Activated CD8-positive, alpha-beta T cell treated with anti-CD3 and anti-CD28 coated beads, Interleukin-2, amount 10 ng/mL, durations not matched to agents 7 days and 5 days (primary cell): ENCODE measurements at regions of chr11 and their contacts with region 1.

Region 1: DNA sequence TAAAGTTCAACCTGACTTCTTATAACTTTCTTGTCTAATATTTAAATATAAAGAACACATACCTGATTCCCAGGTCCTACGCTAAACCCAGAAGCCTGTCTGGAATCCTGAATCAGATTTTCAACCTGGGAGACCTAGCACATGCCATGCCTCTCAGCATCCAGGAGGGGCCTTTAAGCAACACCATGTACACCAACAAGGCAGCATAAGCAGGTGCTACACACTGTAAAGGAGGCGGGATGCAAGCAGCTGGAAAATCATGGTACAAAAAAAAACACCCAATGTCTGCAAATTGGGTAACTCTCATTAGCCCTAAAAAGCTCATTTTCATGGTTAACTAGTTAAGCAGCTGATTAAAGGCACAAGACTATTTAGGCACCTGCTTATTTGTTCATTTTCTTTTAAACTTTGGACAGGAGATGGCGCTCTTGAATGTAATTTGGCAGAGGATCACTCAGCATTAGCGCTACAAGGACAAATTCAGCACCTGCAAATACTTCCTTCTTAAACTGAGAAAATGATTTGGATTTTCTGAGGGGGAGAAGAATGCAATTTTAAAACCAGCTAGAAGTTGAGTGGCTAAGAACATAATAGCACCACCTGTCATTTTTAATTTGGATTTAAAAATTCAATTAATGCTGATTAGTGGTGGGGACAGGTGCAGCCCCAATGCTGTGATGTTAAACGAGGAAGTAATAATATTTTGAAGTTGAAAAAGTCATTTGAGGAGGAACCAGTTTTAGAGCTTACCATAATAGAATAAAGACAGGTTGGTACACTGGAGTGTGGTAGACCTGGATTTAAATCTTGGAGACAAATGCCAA is 104.0 kb downstream of the FAR1 start:
- DNase-seq: peak; percentile 57
- ATAC-seq: peak; percentile 77
- H3K4me3 Mint-ChIP-seq: no peak overlapping the region
- H3K27ac Mint-ChIP-seq: no peak overlapping the region
- H3K4me1 Mint-ChIP-seq: no peaks in the 10 kb centered on the region
- H3K27me3 Mint-ChIP-seq: peaks cover 16% of the 10 kb centered on the region

Region 2: DNA sequence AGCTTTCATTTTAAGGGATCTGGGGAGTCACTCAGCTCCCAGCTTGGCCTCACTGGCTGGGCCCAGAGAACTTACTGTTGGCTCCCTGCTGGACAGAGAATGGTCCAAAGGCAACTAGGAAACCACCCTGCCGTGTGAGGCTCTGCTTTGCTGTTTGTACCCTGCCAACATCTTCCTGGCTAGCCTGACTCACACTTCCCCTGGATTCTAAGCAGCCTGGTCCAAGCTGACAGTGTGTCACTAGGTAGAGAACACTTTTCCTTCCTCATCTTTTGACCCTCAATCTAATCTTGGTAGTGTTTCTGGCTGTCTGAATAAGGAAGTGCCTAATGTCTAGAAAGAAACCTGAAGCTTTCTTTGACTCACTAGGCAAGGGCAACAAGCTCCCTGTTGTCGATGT is 27.3 kb before region 1 on chr11:
- CTCF ChIA-PET with region 1: no interaction called
- POLR2A ChIA-PET with region 1: no interaction called
- DNase-seq: no peak
- ATAC-seq: no peak
- H3K4me3 Mint-ChIP-seq: no peak overlapping the region
- H3K27ac Mint-ChIP-seq: no peak overlapping the region
- H3K4me1 Mint-ChIP-seq: no peaks in the 10 kb centered on the region
- H3K27me3 Mint-ChIP-seq: peaks cover 13% of the 10 kb centered on the region

Region 3: DNA sequence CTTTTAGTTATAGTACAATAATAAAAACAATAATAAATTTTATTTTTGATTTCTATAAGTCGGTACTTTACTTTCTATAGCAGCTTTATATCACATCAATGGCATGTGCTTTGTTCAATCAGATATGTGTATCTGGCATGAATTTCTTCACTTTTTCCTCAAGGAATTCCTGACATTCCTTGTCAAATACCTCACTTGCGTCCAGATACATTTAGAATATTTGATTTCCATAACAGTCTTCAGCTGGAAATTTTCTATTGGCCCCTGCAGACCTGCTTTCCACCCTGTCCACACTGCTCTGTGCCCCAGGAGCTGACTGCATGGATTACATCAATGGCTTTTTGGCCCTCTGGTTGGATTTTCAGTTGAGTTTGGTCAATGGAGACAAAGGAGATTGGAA is 10.7 kb before region 1 on chr11:
- CTCF ChIA-PET with region 1: interaction called, 11 read pairs
- POLR2A ChIA-PET with region 1: no interaction called
- DNase-seq: no peak
- ATAC-seq: no peak
- H3K4me3 Mint-ChIP-seq: no peak overlapping the region
- H3K27ac Mint-ChIP-seq: no peak overlapping the region
- H3K4me1 Mint-ChIP-seq: no peaks in the 10 kb centered on the region
- H3K27me3 Mint-ChIP-seq: no peaks in the 10 kb centered on the region

Region 4: DNA sequence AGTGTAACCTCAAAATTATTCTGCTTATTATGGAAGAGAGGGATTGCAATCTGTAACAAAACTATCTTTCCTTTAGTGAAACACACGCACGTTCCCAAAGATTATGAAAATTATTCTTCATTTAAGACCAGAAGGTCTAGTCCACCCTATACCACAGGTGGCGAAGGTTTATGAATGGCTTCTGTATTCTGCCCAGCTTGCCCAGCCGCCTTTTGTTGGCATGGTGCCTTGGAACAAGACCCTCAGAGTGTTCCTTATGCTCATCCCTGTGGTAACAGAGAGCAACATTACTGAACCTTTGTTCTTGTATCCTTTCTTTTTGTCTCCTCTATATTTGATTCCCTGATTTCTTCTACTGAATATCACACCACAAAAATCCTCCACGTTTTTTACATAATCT is 12.4 kb after region 1 on chr11:
- CTCF ChIA-PET with region 1: interaction called, 12 read pairs
- POLR2A ChIA-PET with region 1: no interaction called
- DNase-seq: no peak
- ATAC-seq: no peak
- H3K4me3 Mint-ChIP-seq: no peak overlapping the region
- H3K27ac Mint-ChIP-seq: no peak overlapping the region
- H3K4me1 Mint-ChIP-seq: no peaks in the 10 kb centered on the region
- H3K27me3 Mint-ChIP-seq: peaks cover 4% of the 10 kb centered on the region

Region 5: GRCh38 chr11:13955971-13956421 is 183.6 kb after region 1 on chr11:
- CTCF ChIA-PET with region 1: interaction called, 45 read pairs
- POLR2A ChIA-PET with region 1: no interaction called
- DNase-seq: peak; percentile 69
- ATAC-seq: peak; percentile 58
- H3K4me3 Mint-ChIP-seq: no peak overlapping the region
- H3K27ac Mint-ChIP-seq: no peak overlapping the region
- H3K4me1 Mint-ChIP-seq: no peaks in the 10 kb centered on the region
- H3K27me3 Mint-ChIP-seq: peaks cover 30% of the 10 kb centered on the region

Region 6: DNA sequence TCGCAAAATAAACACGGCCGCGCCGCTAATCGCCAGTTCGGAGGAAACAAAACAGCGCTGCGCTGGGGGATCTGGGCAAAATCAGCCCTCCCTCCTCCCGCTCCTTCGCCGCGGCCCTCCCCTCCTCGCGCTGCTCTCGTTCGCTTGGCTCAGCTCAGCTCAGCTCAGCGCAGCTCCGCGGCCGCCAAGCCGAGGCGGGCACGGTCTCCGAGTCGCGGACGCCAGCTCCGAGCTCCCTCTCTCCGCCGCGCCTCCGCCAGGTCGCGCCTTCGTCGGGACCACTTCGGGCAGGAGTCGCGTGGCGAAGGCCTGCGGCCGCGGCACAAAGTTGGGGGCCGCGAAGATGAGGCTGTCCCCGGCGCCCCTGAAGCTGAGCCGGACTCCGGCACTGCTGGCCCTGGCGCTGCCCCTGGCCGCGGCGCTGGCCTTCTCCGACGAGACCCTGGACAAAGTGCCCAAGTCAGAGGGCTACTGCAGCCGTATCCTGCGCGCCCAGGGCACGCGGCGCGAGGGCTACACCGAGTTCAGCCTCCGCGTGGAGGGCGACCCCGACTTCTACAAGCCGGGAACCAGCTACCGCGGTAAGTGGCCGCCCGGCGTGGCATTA is 190.2 kb after region 1 on chr11 and contains the start of gene SPON1:
- CTCF ChIA-PET with region 1: interaction called, 45 read pairs
- POLR2A ChIA-PET with region 1: no interaction called
- DNase-seq: peak; percentile 59
- ATAC-seq: peak; percentile 82
- H3K4me3 Mint-ChIP-seq: peak within 1 kb of the TSS; percentile 59
- H3K27ac Mint-ChIP-seq: peak within 1 kb of the TSS; percentile 14
- H3K4me1 Mint-ChIP-seq: peaks cover 11% of the 10 kb centered on the region
- H3K27me3 Mint-ChIP-seq: peaks cover 72% of the 10 kb centered on the region
- total RNA-seq, gene SPON1: 0.42 to 0.47 TPM

Region 7: DNA sequence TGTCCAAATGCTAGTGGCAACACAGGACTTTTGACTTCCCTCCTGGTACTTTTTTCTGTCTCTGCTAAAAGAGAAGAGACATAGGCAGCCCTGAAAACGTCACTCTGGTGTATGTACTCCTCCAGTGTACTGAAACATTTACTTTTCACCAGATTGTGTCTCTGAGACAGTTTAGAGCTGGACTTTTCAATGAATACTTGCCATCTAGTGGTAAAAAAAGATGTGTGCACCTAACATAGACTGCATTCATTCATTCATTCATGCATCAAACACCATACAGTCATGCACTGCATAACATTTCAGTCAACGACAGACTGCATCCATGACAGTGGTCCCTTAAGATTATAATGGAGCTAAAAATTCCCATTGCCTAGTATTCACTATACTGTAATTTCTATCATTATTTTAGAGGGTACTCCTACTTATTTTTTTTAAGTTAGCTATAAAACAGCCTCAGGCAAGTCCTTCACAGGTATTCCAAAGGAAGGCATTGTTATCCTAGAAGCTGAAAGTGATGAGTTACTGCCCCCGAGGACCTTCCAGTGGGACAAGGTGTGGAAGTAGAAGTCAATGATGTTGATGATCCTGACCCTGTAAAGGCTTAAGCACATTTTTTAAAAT is 376.3 kb after region 1 on chr11:
- CTCF ChIA-PET with region 1: interaction called, 37 read pairs
- POLR2A ChIA-PET with region 1: no interaction called
- DNase-seq: no peak
- ATAC-seq: peak; percentile 79
- H3K4me3 Mint-ChIP-seq: no peak overlapping the region
- H3K27ac Mint-ChIP-seq: no peak overlapping the region
- H3K4me1 Mint-ChIP-seq: no peaks in the 10 kb centered on the region
- H3K27me3 Mint-ChIP-seq: peaks cover 2% of the 10 kb centered on the region

Region 8: GRCh38 chr11:14249121-14249963 is 476.9 kb after region 1 on chr11:
- CTCF ChIA-PET with region 1: interaction called, 61 read pairs
- POLR2A ChIA-PET with region 1: interaction called, 3 read pairs
- DNase-seq: peak; percentile 81
- ATAC-seq: peak; percentile 61
- H3K4me3 Mint-ChIP-seq: peak overlapping the region; percentile 45
- H3K27ac Mint-ChIP-seq: no peak overlapping the region
- H3K4me1 Mint-ChIP-seq: peaks cover 24% of the 10 kb centered on the region
- H3K27me3 Mint-ChIP-seq: peaks cover 8% of the 10 kb centered on the region